Naive thymus-derived CD4-positive, alpha-beta T cell (primary cell): ENCODE measurements at regions of chr9 and their contacts with region 1.

Region 1: GRCh38 chr9:21789541-21790037 is 12.8 kb upstream of the MTAP start:
- DNase-seq: peak in 7 of 9 donors; percentile 60 to 80 (median 72)
- ATAC-seq: peak; percentile 98
- H3K4me3 ChIP-seq: peak overlapping the region; percentile 18
- H3K4me3 Mint-ChIP-seq: peak overlapping the region in 9 of 10 donors; percentile 55 to 85 (median 73)
- H3K27ac ChIP-seq: no peak overlapping the region
- H3K27ac Mint-ChIP-seq: peak overlapping the region in 4 of 9 donors; percentile 11 to 63 (median 36)
- H3K4me1 ChIP-seq: no peaks in the 10 kb centered on the region
- H3K4me1 Mint-ChIP-seq: peaks cover 0 to 7% (median 0%) of the 10 kb centered on the region in 7 donors
- H3K27me3 ChIP-seq: no peaks in the 10 kb centered on the region
- H3K27me3 Mint-ChIP-seq: peaks cover 0 to 45% (median 0%) of the 10 kb centered on the region in 5 donors

Region 2: GRCh38 chr9:21210311-21210710 is 579.3 kb before region 1 on chr9:
- CTCF ChIA-PET with region 1: interaction called, 4 read pairs
- POLR2A ChIA-PET with region 1: no interaction called
- intact Hi-C with region 1: loop called in 1 of 2 experiments (anchors 1 kb)
- DNase-seq: no peak
- ATAC-seq: no peak
- H3K4me3 ChIP-seq: no peak overlapping the region
- H3K4me3 Mint-ChIP-seq: no peak overlapping the region
- H3K27ac ChIP-seq: no peak overlapping the region
- H3K27ac Mint-ChIP-seq: no peak overlapping the region
- H3K4me1 ChIP-seq: no peaks in the 10 kb centered on the region
- H3K4me1 Mint-ChIP-seq: peaks cover 0 to 5% (median 3%) of the 10 kb centered on the region in 7 donors
- H3K27me3 ChIP-seq: no peaks in the 10 kb centered on the region
- H3K27me3 Mint-ChIP-seq: peaks cover 5 to 22% (median 6%) of the 10 kb centered on the region in 5 donors

Region 3: DNA sequence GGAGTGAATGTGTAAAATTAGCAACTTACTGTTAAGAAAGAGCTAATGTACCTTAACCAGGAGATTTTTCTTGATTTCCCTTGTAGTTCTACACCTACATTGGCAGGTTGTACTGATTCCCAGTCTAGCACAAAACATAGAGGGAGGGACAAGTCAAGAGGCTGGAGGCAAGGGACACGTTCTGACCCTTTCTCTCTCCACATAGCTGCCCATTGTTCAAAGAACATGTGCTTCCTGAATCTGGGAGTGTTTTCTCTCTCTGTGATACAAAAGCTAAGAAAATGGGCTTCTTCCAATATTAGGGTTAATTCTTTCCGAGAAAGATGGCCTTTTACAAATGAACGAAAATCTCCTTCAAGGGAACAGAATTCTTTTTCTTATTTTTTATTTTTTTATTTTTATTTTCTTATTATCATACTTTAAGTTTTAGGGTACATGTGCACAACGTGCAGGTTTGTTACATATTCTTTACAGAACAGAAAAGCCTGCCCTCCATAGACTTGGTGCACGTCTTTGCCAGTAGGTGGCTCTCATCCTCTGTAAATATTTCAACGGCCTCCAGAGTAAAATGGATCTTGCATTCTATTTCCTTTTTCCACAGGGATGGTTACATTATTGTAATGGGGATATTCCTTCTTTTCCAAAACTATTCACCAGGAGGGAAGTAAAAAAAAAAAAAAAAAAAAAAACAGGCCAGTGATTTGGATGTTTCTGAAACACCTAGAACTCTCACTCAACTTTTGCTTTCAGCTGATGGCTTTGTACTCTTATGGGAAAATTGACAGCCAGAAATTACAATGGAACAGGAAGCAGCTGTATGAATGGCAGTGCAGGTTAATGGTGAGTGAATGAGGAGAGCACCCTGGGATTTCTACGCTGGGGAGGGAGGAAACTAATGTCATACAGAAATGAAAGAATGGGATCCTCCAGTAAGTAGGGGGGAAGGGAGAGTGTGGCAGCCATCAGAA is 471.3 kb before region 1 on chr9:
- CTCF ChIA-PET with region 1: no interaction called
- POLR2A ChIA-PET with region 1: no interaction called
- intact Hi-C with region 1: loop called (anchors 1 kb)
- DNase-seq: peak in 6 of 9 donors; percentile 16 to 39 (median 28)
- ATAC-seq: peak; percentile 84
- H3K4me3 ChIP-seq: no peak overlapping the region
- H3K4me3 Mint-ChIP-seq: no peak overlapping the region
- H3K27ac ChIP-seq: no peak overlapping the region
- H3K27ac Mint-ChIP-seq: peak overlapping the region in 2 of 9 donors; percentile 54
- H3K4me1 ChIP-seq: no peaks in the 10 kb centered on the region
- H3K4me1 Mint-ChIP-seq: peaks cover 4 to 6% (median 5%) of the 10 kb centered on the region in 7 donors
- H3K27me3 ChIP-seq: no peaks in the 10 kb centered on the region
- H3K27me3 Mint-ChIP-seq: peaks cover 0 to 21% (median 0%) of the 10 kb centered on the region in 5 donors

Region 4: DNA sequence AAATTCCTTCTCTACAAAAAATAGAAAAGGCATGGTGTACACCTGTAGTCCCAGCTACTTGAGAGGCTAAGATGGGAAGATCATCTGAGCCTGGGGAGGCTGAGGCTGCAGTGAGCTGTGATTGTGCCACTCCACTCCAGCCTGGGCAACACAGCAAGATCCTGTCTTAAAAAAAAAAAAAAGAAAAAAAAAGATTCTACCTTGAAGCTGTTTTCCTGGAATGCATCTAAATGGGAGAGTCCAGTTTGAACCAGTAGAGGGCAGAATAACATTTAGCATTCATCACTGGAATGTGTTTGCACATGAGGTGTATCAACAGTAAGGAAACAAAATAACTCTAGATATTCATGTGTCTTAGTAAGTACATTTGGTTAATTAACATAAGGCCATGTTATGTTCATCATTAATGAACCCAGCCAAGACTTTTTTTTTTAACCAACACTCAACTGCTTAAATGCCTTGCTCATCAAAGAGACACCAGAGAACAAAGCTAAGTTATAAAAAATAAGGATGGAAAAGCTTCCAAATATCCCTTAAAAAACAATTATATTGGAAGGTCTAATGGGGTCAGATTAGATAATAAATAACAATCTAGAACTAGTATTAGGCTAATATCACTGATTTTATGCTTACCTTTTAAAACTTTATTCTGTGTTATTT is 323.6 kb before region 1 on chr9:
- CTCF ChIA-PET with region 1: interaction called, 33 read pairs
- POLR2A ChIA-PET with region 1: interaction called, 3 read pairs
- intact Hi-C with region 1: loop called (anchors 1 kb)
- DNase-seq: peak in 7 of 9 donors; percentile 37 to 67 (median 59)
- ATAC-seq: peak; percentile 85
- H3K4me3 ChIP-seq: no peak overlapping the region
- H3K4me3 Mint-ChIP-seq: no peak overlapping the region
- H3K27ac ChIP-seq: no peak overlapping the region
- H3K27ac Mint-ChIP-seq: no peak overlapping the region
- H3K4me1 ChIP-seq: no peaks in the 10 kb centered on the region
- H3K4me1 Mint-ChIP-seq: peaks cover 0 to 4% (median 0%) of the 10 kb centered on the region in 7 donors
- H3K27me3 ChIP-seq: no peaks in the 10 kb centered on the region
- H3K27me3 Mint-ChIP-seq: peaks cover under 1 to 37% (median 4%) of the 10 kb centered on the region in 5 donors

Region 5: DNA sequence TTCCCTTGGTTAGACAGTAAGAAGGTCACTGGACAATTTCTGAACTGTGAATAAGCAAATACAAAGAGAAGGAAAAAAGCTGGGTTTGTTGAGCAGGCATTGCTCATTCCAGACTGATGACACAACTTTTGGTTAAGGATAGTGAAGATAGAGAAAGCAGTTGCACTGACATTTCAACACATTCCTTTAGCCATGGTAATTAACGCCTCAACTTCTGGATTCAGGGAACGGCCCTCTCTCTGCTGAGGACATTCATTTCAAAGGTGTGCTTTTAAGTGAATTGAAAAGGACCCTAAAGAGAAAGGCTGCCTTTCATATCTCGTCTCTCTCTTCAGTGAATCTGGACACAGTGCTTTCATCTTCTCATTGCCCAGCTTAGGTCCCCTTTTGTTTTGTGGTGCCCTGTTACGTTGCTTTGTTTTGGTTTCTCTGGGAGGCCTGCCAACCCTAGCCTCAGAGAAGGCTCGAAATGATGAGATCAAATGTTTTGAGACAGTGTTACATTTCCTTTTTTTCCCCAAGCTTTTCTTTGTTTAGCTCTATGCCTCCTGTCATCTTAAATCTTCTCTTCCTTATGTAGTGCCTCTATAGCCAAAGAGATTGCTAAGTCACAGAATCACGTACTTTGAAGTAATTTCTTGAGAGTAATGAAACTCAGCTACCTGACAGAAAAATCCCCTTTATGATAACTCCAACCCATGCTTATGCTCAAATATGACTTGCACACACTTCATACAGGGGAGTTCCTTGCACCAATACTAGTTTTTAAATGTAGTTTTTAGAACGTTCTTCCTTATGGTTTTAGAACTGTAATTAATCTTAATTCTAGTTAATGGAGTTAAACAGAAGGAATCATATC is 213.0 kb before region 1 on chr9:
- CTCF ChIA-PET with region 1: interaction called, 6 read pairs
- POLR2A ChIA-PET with region 1: no interaction called
- intact Hi-C with region 1: loop called (anchors 5 kb)
- DNase-seq: peak in 7 of 9 donors; percentile 44 to 80 (median 60)
- ATAC-seq: peak; percentile 69
- H3K4me3 ChIP-seq: no peak overlapping the region
- H3K4me3 Mint-ChIP-seq: peak overlapping the region; percentile 3 to 77 (median 58)
- H3K27ac ChIP-seq: peak overlapping the region; percentile 48
- H3K27ac Mint-ChIP-seq: peak overlapping the region; percentile 34 to 95 (median 87)
- H3K4me1 ChIP-seq: peaks cover 25 to 33% of the 10 kb centered on the region in 2 donors
- H3K4me1 Mint-ChIP-seq: peaks cover 23 to 51% (median 39%) of the 10 kb centered on the region in 7 donors
- H3K27me3 ChIP-seq: no peaks in the 10 kb centered on the region
- H3K27me3 Mint-ChIP-seq: peaks cover 0 to 34% (median 0%) of the 10 kb centered on the region in 5 donors

Region 6: GRCh38 chr9:21744841-21745240 is 44.7 kb before region 1 on chr9:
- CTCF ChIA-PET with region 1: interaction called, 5 read pairs
- POLR2A ChIA-PET with region 1: no interaction called
- intact Hi-C with region 1: loop called in 1 of 2 experiments (anchors 5 kb)
- DNase-seq: no peak
- ATAC-seq: peak; percentile 42
- H3K4me3 ChIP-seq: no peak overlapping the region
- H3K4me3 Mint-ChIP-seq: no peak overlapping the region
- H3K27ac ChIP-seq: no peak overlapping the region
- H3K27ac Mint-ChIP-seq: no peak overlapping the region
- H3K4me1 ChIP-seq: no peaks in the 10 kb centered on the region
- H3K4me1 Mint-ChIP-seq: peaks cover 0 to 4% (median 0%) of the 10 kb centered on the region in 7 donors
- H3K27me3 ChIP-seq: no peaks in the 10 kb centered on the region
- H3K27me3 Mint-ChIP-seq: peaks cover 0 to 72% (median 8%) of the 10 kb centered on the region in 5 donors

Region 7: DNA sequence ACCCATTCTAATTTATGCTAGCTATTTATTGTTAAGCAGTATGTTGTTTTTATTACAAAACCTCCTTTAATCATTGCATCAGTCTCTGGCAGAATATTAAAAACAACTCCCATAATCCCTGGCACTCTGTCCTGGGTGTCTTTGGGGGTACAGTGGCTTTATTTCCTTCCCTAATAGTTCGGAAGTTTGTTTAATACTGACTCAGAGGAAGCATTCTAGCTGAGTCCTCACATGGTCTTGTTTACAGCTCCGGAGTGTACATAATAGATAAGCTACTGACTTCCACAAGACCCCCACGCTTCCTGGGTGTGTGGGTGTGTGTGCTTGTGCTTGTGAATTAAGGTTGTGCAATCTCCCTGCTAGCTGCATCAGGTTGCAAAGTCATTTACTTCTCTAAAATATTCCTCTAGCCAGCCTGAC is 369.3 kb after region 1 on chr9:
- CTCF ChIA-PET with region 1: no interaction called
- POLR2A ChIA-PET with region 1: no interaction called
- intact Hi-C with region 1: no loop called
- DNase-seq: peak in 1 of 9 donors; percentile 24
- ATAC-seq: peak; percentile 65
- H3K4me3 ChIP-seq: no peak overlapping the region
- H3K4me3 Mint-ChIP-seq: no peak overlapping the region
- H3K27ac ChIP-seq: no peak overlapping the region
- H3K27ac Mint-ChIP-seq: no peak overlapping the region
- H3K4me1 ChIP-seq: no peaks in the 10 kb centered on the region
- H3K4me1 Mint-ChIP-seq: no peaks in the 10 kb centered on the region
- H3K27me3 ChIP-seq: no peaks in the 10 kb centered on the region
- H3K27me3 Mint-ChIP-seq: peaks cover 0 to 43% (median 8%) of the 10 kb centered on the region in 5 donors